GM10248 (cell line): ENCODE measurements at regions of chr16 and their contacts with region 1.

Region 1: GRCh38 chr16:50509521-50510341 is 38.5 kb upstream of the NKD1 start:
- DNase-seq: peak; percentile 51
- CTCF ChIP-seq: peak; percentile 64

Region 2: DNA sequence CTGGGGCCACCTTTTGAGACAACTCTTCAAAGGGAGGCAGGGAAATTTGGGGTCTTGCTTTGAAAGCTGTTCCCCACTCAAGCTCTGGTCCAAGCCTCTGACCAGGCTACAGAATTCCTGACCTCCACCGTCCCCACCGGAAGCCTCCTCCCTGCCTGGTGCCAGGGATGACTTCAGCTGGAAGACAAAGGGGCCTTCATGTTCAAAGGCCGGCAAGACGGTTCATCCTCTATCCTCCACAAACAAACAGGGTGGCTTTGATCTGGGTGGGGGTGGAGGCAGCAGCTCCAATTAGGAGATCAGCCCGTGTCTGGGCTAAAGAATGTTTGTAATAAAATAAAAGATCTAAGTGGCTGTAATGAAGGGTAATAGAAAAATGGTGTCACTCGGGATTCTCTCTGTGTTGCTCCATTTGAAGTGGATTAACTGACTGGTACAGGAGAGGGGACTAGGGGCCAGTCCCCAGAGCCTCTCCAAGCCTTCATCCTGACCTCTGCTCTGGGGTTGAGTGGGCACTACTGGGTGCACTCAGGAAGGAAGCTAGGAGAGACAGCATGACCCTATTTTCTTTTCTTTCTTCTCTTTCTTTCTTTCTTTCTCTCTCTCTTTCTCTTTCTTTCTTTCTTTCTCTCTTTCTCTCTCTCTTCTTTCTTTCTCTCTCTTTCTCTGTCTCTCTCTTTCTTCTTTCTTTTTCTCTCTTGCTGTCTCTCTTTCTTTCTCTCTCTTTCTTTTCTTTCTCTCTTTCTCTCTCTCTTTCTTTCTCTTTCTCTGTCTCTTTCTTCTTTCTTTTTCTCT is 10.9 kb after region 1 on chr16:
- CTCF ChIA-PET with region 1: interaction called, 27 read pairs
- POLR2A ChIA-PET with region 1: no interaction called
- DNase-seq: no peak
- CTCF ChIP-seq: no peak

Region 3: GRCh38 chr16:50593410-50594150 is 83.8 kb after region 1 on chr16:
- CTCF ChIA-PET with region 1: no interaction called
- POLR2A ChIA-PET with region 1: no interaction called
- DNase-seq: no peak
- CTCF ChIP-seq: peak; percentile 14

Region 4: GRCh38 chr16:50844840-50845239 is 335.1 kb after region 1 on chr16:
- CTCF ChIA-PET with region 1: no interaction called
- POLR2A ChIA-PET with region 1: no interaction called
- DNase-seq: no peak
- CTCF ChIP-seq: no peak